ENCODE measurements at regions of chr12 and their contacts with region 1.

Region 1: GRCh38 chr12:52903285-52903854 is 1.5 kb downstream of the KRT8 start:
- H3K4me3 ChIP-seq: peak overlapping the region; percentile 68
- H3K27ac ChIP-seq: peak overlapping the region; percentile 54
- H3K4me1 ChIP-seq: peaks cover 18% of the 10 kb centered on the region
- CTCF ChIP-seq: no peak

Region 2: DNA sequence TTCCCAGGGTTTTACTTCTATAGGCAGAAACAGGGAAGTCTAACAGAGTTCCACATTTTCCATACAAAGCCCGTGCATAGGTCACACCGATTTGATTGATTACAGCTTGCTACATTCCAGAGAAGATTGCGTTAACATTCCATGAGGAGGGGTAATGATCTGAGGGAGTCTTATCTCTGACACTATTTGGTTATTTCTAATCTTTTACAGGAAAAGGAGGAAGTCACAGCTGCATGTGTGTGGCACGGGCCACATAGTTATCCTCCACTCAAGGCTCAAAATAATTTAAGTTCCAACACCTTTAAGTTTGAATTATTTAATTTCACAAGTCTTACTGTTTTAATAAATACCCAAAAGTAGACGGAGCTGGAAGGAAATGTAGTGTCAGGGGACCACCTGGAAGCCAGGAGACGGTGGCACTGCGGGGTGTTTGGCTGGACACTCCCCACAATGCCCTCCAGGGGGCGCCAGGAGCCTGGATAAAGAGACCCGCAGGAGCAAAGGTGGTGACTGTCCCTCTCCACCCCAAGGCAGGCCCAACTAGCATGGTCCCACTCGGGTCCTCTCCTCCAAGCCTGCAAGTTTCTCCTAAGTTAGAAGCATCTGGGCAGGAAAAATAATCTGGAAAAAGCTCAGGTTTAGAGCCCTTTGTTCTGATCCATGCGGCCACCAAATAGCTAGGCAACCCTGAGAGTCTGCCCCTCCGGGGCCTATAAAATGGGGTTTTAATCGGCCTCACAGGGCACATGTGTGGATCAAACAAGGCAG is 18.7 kb before region 1 on chr12:
- CTCF ChIA-PET with region 1: interaction called, 260 read pairs
- POLR2A ChIA-PET with region 1: interaction called, 32 read pairs
- H3K4me3 ChIP-seq: no peak overlapping the region
- H3K27ac ChIP-seq: no peak overlapping the region
- H3K4me1 ChIP-seq: no peaks in the 10 kb centered on the region
- CTCF ChIP-seq: peak; percentile 75

Region 3: GRCh38 chr12:52924764-52925716 is 21.7 kb after region 1 on chr12:
- CTCF ChIA-PET with region 1: interaction called, 11 read pairs
- POLR2A ChIA-PET with region 1: interaction called, 71 read pairs
- H3K4me3 ChIP-seq: no peak overlapping the region
- H3K27ac ChIP-seq: peak overlapping the region; percentile 28
- H3K4me1 ChIP-seq: peaks cover 17% of the 10 kb centered on the region
- CTCF ChIP-seq: no peak

Region 4: GRCh38 chr12:52949413-52950331 is 46.3 kb after region 1 on chr12:
- CTCF ChIA-PET with region 1: interaction called, 28 read pairs
- POLR2A ChIA-PET with region 1: interaction called, 202 read pairs
- H3K4me3 ChIP-seq: peak overlapping the region; percentile 65
- H3K27ac ChIP-seq: peak overlapping the region; percentile 82
- H3K4me1 ChIP-seq: peaks cover 7% of the 10 kb centered on the region; the same call in 1 of the 2 replicates
- CTCF ChIP-seq: peak; percentile 62; the same call in 1 of the 2 replicates

Region 5: DNA sequence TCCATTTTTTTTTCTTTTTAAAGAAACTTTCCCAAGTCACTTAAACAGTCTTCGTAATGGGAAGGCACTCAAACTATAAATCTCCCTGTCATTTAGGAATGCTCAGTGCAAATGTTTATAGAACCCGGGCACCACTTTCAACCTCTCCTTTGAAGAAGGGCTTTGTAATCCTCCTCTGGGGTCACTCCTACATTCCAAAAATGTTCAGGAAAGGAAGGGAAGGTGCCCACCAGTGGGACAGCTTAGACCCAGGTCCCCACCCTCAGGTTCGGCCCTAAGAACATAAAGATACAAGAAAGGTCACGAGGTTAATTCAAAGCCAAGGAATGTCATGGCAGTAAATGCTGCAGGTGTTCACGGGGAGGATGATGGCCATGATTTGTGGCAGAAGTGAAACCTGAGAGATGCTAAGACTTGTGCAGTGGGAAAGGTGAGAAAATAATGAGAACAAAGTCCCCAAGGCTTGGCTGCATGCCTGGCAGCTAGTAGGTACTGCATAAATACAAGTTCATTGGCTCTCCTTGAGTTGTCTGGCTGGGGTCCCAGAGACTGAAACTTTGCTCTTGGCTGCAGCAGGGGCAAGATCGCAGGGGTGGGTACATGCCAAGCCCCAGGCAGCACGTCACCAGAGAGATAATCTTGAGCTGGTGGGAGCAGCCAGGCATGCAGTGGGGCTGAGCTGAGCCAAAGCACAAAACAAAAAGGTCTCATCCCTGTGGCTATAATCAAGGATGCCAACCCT is 66.6 kb after region 1 on chr12:
- CTCF ChIA-PET with region 1: interaction called, 316 read pairs
- POLR2A ChIA-PET with region 1: interaction called, 48 read pairs
- H3K4me3 ChIP-seq: no peak overlapping the region
- H3K27ac ChIP-seq: no peak overlapping the region
- H3K4me1 ChIP-seq: peaks cover 4% of the 10 kb centered on the region
- CTCF ChIP-seq: no peak

Measured in HEK293 (cell line).